OCI-LY7 (cell line): ENCODE measurements at regions of chr5 and their contacts with region 1.

Region 1: GRCh38 chr5:112160652-112161391 is 258.3 kb downstream of the EPB41L4A start:
- DNase-seq: peak; percentile 92
- H3K4me3 ChIP-seq: peak overlapping the region; percentile 99
- H3K27ac ChIP-seq: peak overlapping the region; percentile 56
- H3K4me1 ChIP-seq: peaks cover 21% of the 10 kb centered on the region
- CTCF ChIP-seq: peak; percentile 92

Region 2: DNA sequence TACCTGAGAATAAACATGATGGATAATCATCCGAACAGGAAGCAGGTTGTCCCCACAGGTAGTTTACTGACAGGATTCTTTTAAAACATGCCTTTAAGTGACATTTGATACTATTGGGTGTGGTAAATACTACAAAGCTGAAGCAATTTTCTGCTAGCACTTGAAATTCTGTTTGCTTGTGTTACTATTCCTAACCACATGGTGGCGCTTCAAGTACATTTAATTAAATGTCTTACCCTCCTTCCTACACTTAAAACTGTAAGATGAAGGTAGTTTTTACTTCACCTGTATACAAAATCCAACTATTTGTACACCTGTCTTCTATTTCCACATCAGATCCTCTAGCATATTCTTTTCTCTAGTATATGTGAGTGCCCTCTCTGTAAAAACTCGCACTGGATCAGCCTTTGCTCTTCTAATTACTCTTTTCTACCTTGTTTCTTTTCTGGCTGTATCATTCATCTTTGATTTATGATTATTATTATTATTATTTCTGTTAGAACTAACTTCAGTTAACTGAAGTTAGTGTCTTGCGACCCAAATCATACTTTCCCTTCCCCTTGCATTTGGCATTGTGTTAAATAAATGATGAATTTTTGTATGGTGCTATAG is 1403.6 kb before region 1 on chr5:
- CTCF ChIA-PET with region 1: no interaction called
- POLR2A ChIA-PET with region 1: no interaction called
- intact Hi-C with region 1: loop called (anchors 10 kb)
- DNase-seq: peak; percentile 61
- H3K4me3 ChIP-seq: no peak overlapping the region
- H3K27ac ChIP-seq: no peak overlapping the region
- H3K4me1 ChIP-seq: peaks cover 3% of the 10 kb centered on the region
- CTCF ChIP-seq: peak; percentile 91

Region 3: GRCh38 chr5:111703662-111704061 is 457.2 kb before region 1 on chr5:
- CTCF ChIA-PET with region 1: interaction called, 3 read pairs
- POLR2A ChIA-PET with region 1: interaction called, 3 read pairs
- intact Hi-C with region 1: loop called (anchors 5 kb)
- DNase-seq: peak; percentile 93
- H3K4me3 ChIP-seq: peak overlapping the region; percentile 67
- H3K27ac ChIP-seq: peak overlapping the region; percentile 98
- H3K4me1 ChIP-seq: peaks cover 62% of the 10 kb centered on the region
- CTCF ChIP-seq: no peak

Region 4: GRCh38 chr5:111757355-111758283 is 403.2 kb before region 1 on chr5:
- CTCF ChIA-PET with region 1: no interaction called
- POLR2A ChIA-PET with region 1: interaction called, 4 read pairs
- intact Hi-C with region 1: loop called (anchors 1 kb)
- DNase-seq: peak; percentile 90
- H3K4me3 ChIP-seq: peak overlapping the region; percentile 79
- H3K27ac ChIP-seq: peak overlapping the region; percentile 88
- H3K4me1 ChIP-seq: peaks cover 36% of the 10 kb centered on the region
- CTCF ChIP-seq: peak; percentile 42; the same call in 1 of the 2 replicates

Region 5: GRCh38 chr5:111954516-111955395 is 206.1 kb before region 1 on chr5:
- CTCF ChIA-PET with region 1: no interaction called
- POLR2A ChIA-PET with region 1: no interaction called
- intact Hi-C with region 1: no loop called
- DNase-seq: no peak
- H3K4me3 ChIP-seq: no peak overlapping the region
- H3K27ac ChIP-seq: no peak overlapping the region
- H3K4me1 ChIP-seq: no peaks in the 10 kb centered on the region
- CTCF ChIP-seq: no peak

Region 6: DNA sequence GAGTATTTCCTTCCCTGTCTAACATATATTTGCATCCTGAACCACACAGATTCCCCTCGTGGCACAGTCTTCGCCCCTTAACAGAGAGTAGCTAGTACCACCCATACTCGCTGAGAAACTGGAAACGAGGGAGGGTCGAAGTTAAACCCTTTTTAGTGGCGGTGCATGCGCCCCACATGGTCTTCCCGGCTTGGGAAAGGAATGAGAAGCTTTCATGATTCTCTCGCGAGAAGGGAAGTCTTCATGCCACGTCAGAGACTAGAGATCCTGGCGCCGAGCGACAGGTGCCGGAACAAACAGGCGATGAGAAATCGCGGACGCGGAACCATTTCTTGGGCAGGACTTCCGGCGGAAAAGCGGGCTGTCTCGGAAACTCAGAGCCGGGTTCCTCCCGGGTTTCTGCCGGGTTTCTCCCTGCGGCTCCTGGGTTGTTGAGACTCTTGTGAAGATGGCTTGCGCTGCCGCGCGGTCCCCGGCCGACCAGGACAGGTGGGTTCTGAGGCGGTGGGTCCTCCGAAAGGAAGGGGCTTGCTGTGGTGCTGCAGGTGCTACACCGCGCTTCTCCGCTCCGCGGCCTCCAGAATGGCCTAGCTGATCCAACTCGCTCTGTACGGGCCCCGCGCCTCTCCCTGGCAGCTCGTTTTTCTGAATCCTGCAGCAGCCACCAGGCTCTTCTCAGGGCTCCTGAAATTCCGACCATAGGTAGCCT is 700.3 kb after region 1 on chr5 and contains the start of gene SRP19:
- CTCF ChIA-PET with region 1: no interaction called
- POLR2A ChIA-PET with region 1: no interaction called
- intact Hi-C with region 1: loop called (anchors 10 kb)
- DNase-seq: peak; percentile 97
- H3K4me3 ChIP-seq: peak within 1 kb of the TSS; percentile 76
- H3K27ac ChIP-seq: peak within 1 kb of the TSS; percentile 36
- H3K4me1 ChIP-seq: peaks cover 30% of the 10 kb centered on the region
- CTCF ChIP-seq: no peak
- total RNA-seq, gene SRP19: 32.9 and 48.1 TPM in 2 replicates